Endothelial cell of umbilical vein (primary cell): ENCODE measurements at regions of chr1 and their contacts with region 1.

Region 1: GRCh38 chr1:204806943-204807687 is 63.5 kb upstream of the NFASC start:
- DNase-seq: peak; percentile 81
- H3K4me3 ChIP-seq: peak overlapping the region in 2 of 3 experiments; percentile 33 to 40
- H3K27ac ChIP-seq: no peak overlapping the region
- H3K4me1 ChIP-seq: no peaks in the 10 kb centered on the region
- H3K27me3 ChIP-seq: peaks cover 2 to 3% of the 10 kb centered on the region in 2 experiments
- CTCF ChIP-seq: peak; percentile 91 to 100
- POLR2A ChIP-seq: no peak

Region 2: GRCh38 chr1:204431310-204432165 is 375.6 kb before region 1 on chr1:
- CTCF ChIA-PET with region 1: interaction called, 10 read pairs
- POLR2A ChIA-PET with region 1: no interaction called
- dilution Hi-C with region 1: no loop called
- intact Hi-C with region 1: no loop called
- DNase-seq: peak; percentile 75
- H3K4me3 ChIP-seq: no peak overlapping the region
- H3K27ac ChIP-seq: no peak overlapping the region
- H3K4me1 ChIP-seq: peaks cover 12% of the 10 kb centered on the region
- H3K27me3 ChIP-seq: no peaks in the 10 kb centered on the region
- CTCF ChIP-seq: peak; percentile 89 to 90
- POLR2A ChIP-seq: no peak

Region 3: DNA sequence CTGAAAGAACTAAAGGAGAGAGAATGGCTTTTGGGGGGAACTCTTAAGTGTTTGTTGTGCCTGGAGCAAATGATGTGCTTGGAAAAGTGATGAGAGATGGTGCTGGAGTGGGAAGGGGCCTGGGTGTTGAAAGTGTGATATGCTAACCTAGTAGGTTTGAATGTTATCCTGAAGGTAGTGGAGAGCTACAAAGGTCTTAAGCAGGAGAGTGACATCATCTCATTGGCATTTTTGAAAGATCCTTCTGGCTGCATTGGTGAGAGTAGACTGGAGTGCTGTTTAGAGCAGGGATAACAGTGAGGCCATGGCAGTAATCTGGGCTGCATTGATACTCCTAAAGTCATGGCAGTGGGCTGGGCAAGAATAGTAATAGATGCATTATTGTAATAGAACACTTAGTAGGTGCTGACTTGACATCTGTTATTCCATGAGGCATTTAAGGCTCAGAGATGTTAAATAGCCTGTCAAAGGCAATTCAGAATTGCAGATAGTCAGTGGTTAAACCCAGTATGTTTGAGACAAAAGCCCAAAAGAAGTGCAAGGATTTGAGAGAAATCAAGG is 246.4 kb before region 1 on chr1:
- CTCF ChIA-PET with region 1: interaction called, 265 read pairs
- POLR2A ChIA-PET with region 1: interaction called, 3 read pairs
- dilution Hi-C with region 1: no loop called
- intact Hi-C with region 1: loop called (anchors 1 kb)
- DNase-seq: no peak
- H3K4me3 ChIP-seq: no peak overlapping the region
- H3K27ac ChIP-seq: no peak overlapping the region
- H3K4me1 ChIP-seq: no peaks in the 10 kb centered on the region
- H3K27me3 ChIP-seq: no peaks in the 10 kb centered on the region
- CTCF ChIP-seq: no peak
- POLR2A ChIP-seq: no peak

Region 4: DNA sequence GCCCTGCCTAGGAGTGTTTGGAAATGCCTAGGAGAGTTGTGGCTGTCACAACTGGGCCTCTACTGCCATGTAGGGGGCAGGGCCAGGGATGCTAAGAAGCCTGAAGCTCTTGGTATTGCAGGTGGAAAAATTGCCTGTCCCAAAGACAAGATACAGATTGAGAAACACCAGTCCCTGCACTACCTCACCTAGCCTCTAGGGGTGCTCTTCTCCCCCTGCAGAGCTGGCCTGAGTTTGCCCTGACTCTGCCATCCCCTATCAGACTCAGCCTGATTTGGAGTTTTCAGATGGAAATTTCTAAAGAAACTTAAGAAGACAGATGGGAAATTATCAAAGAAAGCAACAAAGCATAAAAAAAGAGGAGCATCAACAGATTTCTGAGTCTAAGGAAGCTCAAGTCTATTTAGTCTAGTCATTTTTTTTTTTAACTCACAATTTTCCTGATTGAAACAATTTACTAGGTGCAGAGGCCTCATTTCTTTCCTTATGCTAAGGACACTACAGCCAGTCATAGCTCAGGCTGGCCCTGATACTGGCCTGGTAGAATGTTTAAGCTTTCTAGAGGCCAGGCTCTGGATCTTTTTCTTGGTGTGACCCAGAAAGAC is 60.2 kb before region 1 on chr1:
- CTCF ChIA-PET with region 1: interaction called, 11 read pairs
- POLR2A ChIA-PET with region 1: no interaction called
- dilution Hi-C with region 1: no loop called
- intact Hi-C with region 1: no loop called
- DNase-seq: peak; percentile 43
- H3K4me3 ChIP-seq: no peak overlapping the region
- H3K27ac ChIP-seq: no peak overlapping the region
- H3K4me1 ChIP-seq: no peaks in the 10 kb centered on the region
- H3K27me3 ChIP-seq: peaks cover 2 to 3% of the 10 kb centered on the region in 2 experiments
- CTCF ChIP-seq: peak; percentile 80 to 96
- POLR2A ChIP-seq: no peak

Region 5: GRCh38 chr1:204819495-204819894 is 12.4 kb after region 1 on chr1:
- CTCF ChIA-PET with region 1: interaction called, 80 read pairs
- POLR2A ChIA-PET with region 1: no interaction called
- dilution Hi-C with region 1: no loop called
- intact Hi-C with region 1: no loop called
- DNase-seq: no peak
- H3K4me3 ChIP-seq: no peak overlapping the region
- H3K27ac ChIP-seq: no peak overlapping the region
- H3K4me1 ChIP-seq: no peaks in the 10 kb centered on the region
- H3K27me3 ChIP-seq: peaks cover 2 to 3% of the 10 kb centered on the region in 2 experiments
- CTCF ChIP-seq: no peak
- POLR2A ChIP-seq: no peak

Region 6: DNA sequence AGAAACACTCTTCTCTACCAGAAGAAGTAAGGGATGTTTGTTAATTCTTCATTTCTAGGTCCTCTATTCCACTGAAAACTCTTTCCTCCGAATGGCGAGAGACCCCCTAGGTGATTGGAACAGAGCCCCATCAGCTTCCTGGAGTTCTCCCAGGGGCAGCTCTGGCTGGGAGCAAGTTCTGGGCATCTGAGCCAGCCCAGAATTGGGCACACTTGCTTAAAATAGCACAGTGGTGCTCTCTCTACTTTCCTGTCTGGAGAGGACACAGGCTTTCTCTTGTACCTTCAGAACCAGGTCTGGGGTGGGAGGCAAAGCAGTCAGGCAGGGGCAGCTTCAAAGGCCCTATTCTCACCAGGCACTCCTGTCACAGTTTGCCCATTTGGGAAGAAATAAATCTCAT is 152.7 kb after region 1 on chr1:
- CTCF ChIA-PET with region 1: no interaction called
- POLR2A ChIA-PET with region 1: no interaction called
- dilution Hi-C with region 1: no loop called
- intact Hi-C with region 1: no loop called
- DNase-seq: no peak
- H3K4me3 ChIP-seq: no peak overlapping the region
- H3K27ac ChIP-seq: no peak overlapping the region
- H3K4me1 ChIP-seq: no peaks in the 10 kb centered on the region
- H3K27me3 ChIP-seq: peaks cover 27 to 28% of the 10 kb centered on the region in 2 experiments
- CTCF ChIP-seq: no peak
- POLR2A ChIP-seq: no peak

Region 7: DNA sequence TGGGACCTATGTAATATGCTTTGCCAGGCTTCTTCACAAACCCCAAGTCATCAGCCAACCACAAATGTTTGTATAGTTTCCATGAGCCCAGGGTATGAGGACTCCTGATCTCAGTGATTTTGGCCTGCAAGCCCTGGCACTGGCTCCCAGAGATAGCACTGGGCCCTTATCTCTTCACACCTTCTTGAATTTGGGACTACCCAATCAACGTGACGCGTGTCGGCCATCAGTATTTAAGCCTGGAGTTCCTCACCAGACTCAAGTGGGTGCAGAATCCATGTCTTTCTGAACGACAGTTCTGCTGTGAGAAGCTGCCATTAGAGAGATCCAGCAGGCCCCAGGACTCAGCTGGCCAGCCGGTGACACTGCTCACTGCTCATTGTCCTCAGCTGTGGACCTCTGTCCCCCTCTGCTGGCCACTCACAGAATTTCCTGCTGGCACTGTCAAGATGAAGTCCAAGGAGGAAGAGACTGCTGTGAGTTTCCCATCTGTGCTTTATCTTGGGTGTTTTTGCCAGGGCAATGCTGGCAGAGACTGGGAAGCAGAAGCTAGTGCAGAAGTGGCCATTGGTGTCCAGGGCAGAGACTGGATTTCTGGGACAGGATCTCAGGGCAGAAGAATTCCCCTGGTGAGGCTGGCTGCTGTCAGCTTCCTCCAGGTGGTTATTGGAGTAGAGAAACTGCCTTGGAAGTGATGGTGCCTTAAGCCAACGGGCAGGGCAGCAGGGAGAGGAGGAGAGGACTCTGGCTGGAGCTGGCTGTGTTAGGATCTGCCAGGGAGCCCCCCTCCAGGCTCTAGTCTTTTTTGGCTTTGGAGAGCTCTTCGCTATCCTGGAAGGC is 449.0 kb after region 1 on chr1:
- CTCF ChIA-PET with region 1: interaction called, 15 read pairs
- POLR2A ChIA-PET with region 1: no interaction called
- dilution Hi-C with region 1: no loop called
- intact Hi-C with region 1: no loop called
- DNase-seq: peak; percentile 83
- H3K4me3 ChIP-seq: no peak overlapping the region
- H3K27ac ChIP-seq: no peak overlapping the region
- H3K4me1 ChIP-seq: peaks cover 3% of the 10 kb centered on the region
- H3K27me3 ChIP-seq: no peaks in the 10 kb centered on the region
- CTCF ChIP-seq: peak; percentile 79 to 92
- POLR2A ChIP-seq: no peak